CD8-positive, alpha-beta memory T cell (primary cell): ENCODE measurements at regions of chr6 and their contacts with region 1.

Region 1: DNA sequence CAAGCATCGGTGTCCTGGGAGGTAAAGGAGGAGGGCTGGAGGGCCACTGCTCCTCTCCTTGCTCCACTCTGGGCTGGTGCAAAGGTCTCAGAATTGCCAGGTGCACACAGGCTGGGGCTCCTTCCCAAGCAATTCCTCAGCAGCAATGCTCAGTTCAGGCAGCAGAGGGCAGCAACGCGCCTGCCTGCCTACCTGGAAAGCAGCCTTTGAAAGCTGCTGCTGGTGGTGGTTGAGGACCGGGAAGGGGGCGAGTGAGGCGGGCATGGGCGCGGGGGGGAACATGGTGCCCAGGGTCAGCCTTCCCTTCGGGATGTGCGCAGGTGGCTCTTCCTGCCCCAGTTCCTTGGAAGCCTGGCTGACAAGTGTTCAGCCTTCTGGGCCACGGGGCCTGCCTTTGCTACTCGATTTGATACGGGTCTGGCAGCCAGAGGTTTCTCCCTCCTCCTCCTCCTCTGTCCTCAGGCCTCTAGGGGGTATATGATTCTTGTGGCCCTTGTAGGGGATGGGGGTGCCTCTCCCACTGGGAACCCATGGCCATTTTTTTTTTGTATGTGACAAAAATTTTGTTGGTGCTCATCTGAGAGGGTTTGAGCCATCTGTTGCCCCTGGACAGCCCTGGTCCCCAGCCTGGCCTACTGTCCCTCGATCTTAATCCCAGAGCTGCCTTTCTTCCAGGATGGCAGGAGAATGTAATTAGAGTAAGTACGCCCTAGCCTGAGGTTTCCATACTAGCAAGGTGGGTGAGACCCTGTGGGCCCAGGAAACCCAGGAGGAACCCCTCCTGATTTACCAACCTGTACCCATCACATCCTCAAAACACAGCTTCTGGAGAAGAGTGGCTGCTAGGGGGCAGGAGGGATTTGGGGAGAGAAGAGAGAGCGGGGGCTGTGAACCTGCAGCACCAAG is 20.1 kb downstream of the MRPS18A start:
- DNase-seq: peak; percentile 68 to 81 (median 72)
- H3K4me3 ChIP-seq: no peak overlapping the region
- H3K4me3 Mint-ChIP-seq: peak overlapping the region in 5 of 7 donors; percentile 55 to 77 (median 66)
- H3K27ac ChIP-seq: no peak overlapping the region
- H3K27ac Mint-ChIP-seq: peak overlapping the region in 4 of 8 donors; percentile 25 to 93 (median 70)
- H3K4me1 ChIP-seq: peaks cover 14% of the 10 kb centered on the region
- H3K4me1 Mint-ChIP-seq: peaks cover 13 to 20% (median 17%) of the 10 kb centered on the region in 3 donors
- H3K27me3 ChIP-seq: no peaks in the 10 kb centered on the region
- H3K27me3 Mint-ChIP-seq: peaks cover 0 to 1% of the 10 kb centered on the region in 2 donors

Region 2: GRCh38 chr6:43629505-43630300 is 37.8 kb before region 1 on chr6:
- CTCF ChIA-PET with region 1: interaction called, 10 read pairs
- POLR2A ChIA-PET with region 1: no interaction called
- DNase-seq: peak; percentile 78 to 88 (median 82)
- H3K4me3 ChIP-seq: peak overlapping the region; percentile 99
- H3K4me3 Mint-ChIP-seq: peak overlapping the region; percentile 96 to 99 (median 98)
- H3K27ac ChIP-seq: peak overlapping the region; percentile 92
- H3K27ac Mint-ChIP-seq: peak overlapping the region; percentile 90 to 99 (median 98)
- H3K4me1 ChIP-seq: peaks cover 12% of the 10 kb centered on the region
- H3K4me1 Mint-ChIP-seq: peaks cover 34 to 45% (median 40%) of the 10 kb centered on the region in 3 donors
- H3K27me3 ChIP-seq: no peaks in the 10 kb centered on the region
- H3K27me3 Mint-ChIP-seq: no peaks in the 10 kb centered on the region

Region 3: DNA sequence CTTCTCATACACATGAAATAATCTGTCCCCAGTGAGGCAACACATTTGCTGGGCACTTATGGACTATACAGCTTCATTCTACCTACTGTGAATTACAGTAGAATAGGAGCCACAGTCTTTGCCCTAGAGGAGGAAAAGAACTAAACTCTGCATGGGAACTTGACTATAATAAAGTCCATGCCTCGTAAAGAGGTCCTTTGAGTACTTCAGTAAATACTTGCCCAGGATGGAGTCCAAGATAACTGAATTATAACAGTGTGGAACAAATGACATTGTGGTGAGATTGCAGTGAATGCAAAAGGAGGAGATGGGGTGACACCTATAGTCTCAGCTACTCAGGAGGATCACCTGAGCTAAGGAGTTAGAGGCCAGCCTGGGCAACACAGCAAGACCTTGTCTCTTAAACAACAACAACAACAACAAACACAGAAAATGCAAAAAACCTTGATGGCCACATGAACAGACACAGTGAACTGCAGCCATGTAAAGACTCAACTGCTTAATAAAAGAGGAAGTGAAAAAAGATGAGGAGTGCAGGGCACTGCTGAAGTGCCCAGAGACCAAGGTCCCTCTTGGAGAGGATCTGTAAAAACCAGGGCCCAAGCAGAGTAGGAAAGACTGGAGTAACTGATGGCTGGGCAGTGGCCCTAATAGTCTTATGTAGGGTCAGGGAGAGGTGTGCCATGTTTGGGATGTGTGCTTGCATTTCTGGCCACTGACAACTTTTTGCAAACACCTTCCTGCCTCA is 16.4 kb after region 1 on chr6:
- CTCF ChIA-PET with region 1: interaction called, 12 read pairs
- POLR2A ChIA-PET with region 1: no interaction called
- DNase-seq: no peak
- H3K4me3 ChIP-seq: no peak overlapping the region
- H3K4me3 Mint-ChIP-seq: peak overlapping the region in 2 of 7 donors; percentile 62 to 76
- H3K27ac ChIP-seq: no peak overlapping the region
- H3K27ac Mint-ChIP-seq: peak overlapping the region in 2 of 8 donors; percentile 8 to 78
- H3K4me1 ChIP-seq: peaks cover 18% of the 10 kb centered on the region
- H3K4me1 Mint-ChIP-seq: peaks cover 43 to 70% (median 64%) of the 10 kb centered on the region in 3 donors
- H3K27me3 ChIP-seq: no peaks in the 10 kb centered on the region
- H3K27me3 Mint-ChIP-seq: no peaks in the 10 kb centered on the region

Region 4: GRCh38 chr6:43769526-43770416 is 102.3 kb after region 1 on chr6 and contains the start of gene VEGFA:
- CTCF ChIA-PET with region 1: interaction called, 12 read pairs
- POLR2A ChIA-PET with region 1: no interaction called
- DNase-seq: peak; percentile 80 to 89 (median 84)
- H3K4me3 ChIP-seq: peak within 1 kb of the TSS; percentile 71
- H3K4me3 Mint-ChIP-seq: peak within 1 kb of the TSS; percentile 83 to 95 (median 91)
- H3K27ac ChIP-seq: peak within 1 kb of the TSS; percentile 92
- H3K27ac Mint-ChIP-seq: peak within 1 kb of the TSS; percentile 26 to 93 (median 84)
- H3K4me1 ChIP-seq: peaks cover 5% of the 10 kb centered on the region
- H3K4me1 Mint-ChIP-seq: peaks cover 13 to 24% (median 15%) of the 10 kb centered on the region in 3 donors
- H3K27me3 ChIP-seq: peaks cover 25% of the 10 kb centered on the region
- H3K27me3 Mint-ChIP-seq: peaks cover 20 to 30% of the 10 kb centered on the region in 2 donors
- total RNA-seq, gene VEGFA: 16.4 to 17.5 TPM

Region 5: DNA sequence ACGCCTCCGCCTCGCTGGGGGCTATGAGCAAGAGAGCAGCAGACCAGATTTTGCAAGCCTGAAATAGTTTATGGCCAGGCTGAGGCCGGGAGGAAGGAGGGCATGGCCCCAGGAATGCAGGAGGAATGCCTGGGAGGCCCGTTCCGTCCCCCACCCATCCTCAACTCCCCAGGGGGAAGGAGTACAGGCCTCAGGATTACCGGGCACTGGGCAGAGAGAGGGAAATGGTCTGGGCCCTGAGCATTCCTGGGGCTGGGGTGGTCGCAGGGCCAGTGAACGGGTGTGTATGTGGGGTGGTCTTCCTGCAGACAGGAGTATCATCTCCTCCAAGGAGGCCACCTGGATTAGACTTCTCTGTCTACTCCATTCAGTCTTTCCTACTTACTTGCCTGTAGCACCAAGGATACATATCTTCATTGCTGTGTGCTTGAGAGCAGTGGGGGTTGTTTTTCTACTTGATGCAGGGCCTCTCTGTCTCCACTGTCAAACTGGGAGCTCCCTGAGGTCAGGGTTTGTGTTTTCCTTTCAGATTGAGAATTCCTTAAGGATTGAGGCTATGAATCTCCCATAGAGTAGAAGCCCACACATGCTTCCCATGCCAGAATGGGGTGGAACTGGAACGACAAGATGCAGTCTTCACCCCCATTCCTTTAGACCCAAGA is 183.8 kb after region 1 on chr6:
- CTCF ChIA-PET with region 1: no interaction called
- POLR2A ChIA-PET with region 1: no interaction called
- DNase-seq: no peak
- H3K4me3 ChIP-seq: no peak overlapping the region
- H3K4me3 Mint-ChIP-seq: no peak overlapping the region
- H3K27ac ChIP-seq: no peak overlapping the region
- H3K27ac Mint-ChIP-seq: peak overlapping the region in 1 of 8 donors; percentile 66
- H3K4me1 ChIP-seq: no peaks in the 10 kb centered on the region
- H3K4me1 Mint-ChIP-seq: no peaks in the 10 kb centered on the region
- H3K27me3 ChIP-seq: no peaks in the 10 kb centered on the region
- H3K27me3 Mint-ChIP-seq: peaks cover 0 to 3% of the 10 kb centered on the region in 2 donors

Region 6: DNA sequence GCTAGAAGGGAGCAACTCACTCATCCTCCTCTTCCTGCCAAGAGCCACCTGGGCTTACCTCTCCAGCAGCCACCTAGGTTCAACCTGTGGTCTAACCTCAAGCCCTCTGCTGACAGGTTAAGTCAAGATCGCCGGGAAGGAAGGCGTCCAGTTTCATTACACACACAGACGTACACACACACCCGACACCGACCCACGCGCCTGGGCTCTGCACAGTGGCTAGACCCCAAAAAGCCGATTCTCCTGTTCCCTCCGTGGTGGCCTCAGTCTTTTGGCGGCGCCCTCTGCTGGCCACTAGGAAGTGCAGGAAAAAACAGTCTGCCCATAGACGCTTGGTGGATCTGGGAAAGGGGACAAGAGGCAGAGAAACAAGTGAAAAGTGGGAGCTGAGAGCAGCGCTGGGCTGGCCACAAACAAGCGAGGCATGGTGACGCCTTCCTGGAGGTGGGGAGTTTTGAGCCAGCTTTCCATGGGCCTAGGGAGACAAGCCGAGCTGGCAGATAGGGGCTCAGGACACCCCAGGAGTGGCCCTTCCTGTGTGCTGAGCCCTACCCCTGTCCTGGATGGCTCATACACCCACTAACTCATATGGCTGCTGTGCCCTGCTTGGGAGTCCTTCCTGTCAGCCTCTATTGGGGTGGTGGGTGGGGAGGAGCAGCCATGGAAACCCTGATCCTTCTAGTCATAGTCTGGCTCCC is 407.1 kb after region 1 on chr6:
- CTCF ChIA-PET with region 1: interaction called, 45 read pairs
- POLR2A ChIA-PET with region 1: no interaction called
- DNase-seq: peak; percentile 44 to 78 (median 56)
- H3K4me3 ChIP-seq: peak overlapping the region; percentile 46
- H3K4me3 Mint-ChIP-seq: peak overlapping the region; percentile 77 to 96 (median 86)
- H3K27ac ChIP-seq: peak overlapping the region; percentile 88
- H3K27ac Mint-ChIP-seq: peak overlapping the region in 4 of 8 donors; percentile 7 to 41 (median 24)
- H3K4me1 ChIP-seq: peaks cover 17% of the 10 kb centered on the region
- H3K4me1 Mint-ChIP-seq: peaks cover 17 to 22% (median 18%) of the 10 kb centered on the region in 3 donors
- H3K27me3 ChIP-seq: no peaks in the 10 kb centered on the region
- H3K27me3 Mint-ChIP-seq: peaks cover 12 to 15% of the 10 kb centered on the region in 2 donors

Region 7: DNA sequence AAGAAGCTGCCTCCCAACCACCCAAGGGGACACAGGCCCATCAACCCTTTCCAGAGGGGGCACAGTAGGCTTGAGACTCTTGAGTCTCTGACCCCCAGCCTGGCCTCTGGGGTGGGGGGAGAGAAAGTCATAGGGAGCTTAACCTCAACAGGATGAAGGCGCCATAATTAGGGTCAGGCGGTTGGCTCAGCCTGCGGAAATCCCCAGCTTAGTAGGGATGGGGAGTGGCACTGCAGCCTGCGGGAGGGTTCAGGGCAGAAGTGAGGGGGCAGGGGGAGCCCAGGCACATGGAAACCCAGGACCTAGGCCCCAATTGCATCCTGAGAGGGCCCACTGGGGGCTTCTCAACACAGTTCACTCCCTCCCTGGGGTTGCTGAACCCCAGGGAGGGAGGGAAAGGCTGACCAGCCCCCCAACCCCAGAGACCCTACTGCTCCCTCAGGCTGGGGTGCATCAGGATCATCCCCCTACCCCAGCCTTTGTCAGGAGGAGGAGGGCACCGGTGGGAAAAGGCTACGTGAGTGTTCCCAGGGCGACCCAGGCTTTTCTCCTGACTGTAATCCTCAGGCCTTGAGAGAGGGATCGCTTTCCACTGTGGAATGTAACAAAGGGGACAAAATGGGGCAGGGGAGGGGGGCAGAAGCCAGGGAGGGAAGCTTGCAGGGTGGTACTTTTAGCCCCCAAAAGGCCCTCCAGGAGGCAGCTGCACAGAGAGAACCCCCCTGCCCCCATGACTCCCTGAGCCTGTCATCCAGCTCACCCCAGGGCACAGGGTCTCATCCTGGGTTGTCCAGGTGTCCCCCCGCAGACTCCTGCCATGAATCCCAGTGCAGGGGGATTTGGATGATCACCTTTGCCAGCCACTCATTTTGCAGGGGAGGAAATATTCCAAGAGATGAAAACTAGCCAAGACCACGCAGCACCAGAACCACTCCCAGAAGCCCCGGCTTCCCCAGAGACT is 413.3 kb after region 1 on chr6:
- CTCF ChIA-PET with region 1: interaction called, 45 read pairs
- POLR2A ChIA-PET with region 1: no interaction called
- DNase-seq: no peak
- H3K4me3 ChIP-seq: no peak overlapping the region
- H3K4me3 Mint-ChIP-seq: no peak overlapping the region
- H3K27ac ChIP-seq: no peak overlapping the region
- H3K27ac Mint-ChIP-seq: no peak overlapping the region
- H3K4me1 ChIP-seq: no peaks in the 10 kb centered on the region
- H3K4me1 Mint-ChIP-seq: no peaks in the 10 kb centered on the region
- H3K27me3 ChIP-seq: no peaks in the 10 kb centered on the region
- H3K27me3 Mint-ChIP-seq: peaks cover 3 to 11% of the 10 kb centered on the region in 2 donors